ENCODE measurements at regions of chr3 and their contacts with region 1.

Region 1: DNA sequence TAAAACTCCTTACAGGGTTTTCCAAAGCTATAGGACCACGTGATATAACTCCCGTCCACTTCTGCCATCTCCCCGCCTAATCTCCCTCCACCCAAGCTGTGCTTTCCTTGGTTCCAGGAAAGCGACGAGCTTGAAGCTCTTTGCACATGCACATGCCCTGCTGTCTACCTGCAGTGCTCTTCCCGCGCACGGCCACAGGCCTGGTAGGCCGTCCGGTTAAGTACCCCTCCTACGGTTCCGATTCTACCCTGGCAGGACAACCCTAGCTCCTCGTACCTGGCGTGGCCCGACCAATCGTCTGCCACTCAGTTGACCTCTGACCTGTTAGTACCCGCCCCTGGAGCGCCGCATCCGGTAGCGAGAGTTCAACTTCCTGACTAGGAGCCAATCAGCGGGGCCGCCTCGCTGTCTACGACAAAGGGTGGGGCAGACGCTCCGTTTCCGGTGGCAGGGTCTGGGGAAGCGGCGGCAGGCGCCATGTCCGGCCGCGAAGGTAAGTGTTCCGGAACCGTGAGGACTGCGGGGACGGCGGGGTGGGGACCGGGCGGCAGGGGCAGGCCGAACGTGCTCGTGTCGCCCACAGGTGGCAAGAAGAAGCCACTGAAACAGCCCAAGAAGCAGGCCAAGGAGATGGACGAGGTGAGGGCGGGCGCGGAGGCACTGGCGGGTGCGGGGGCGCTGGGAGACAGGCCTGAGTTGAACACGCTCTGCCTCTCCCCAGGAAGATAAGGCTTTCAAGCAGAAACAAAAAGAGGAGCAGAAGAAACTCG is at the starts of genes CCDC51 and TMA7:
- DNase-seq: peak; percentile 99
- ATAC-seq: peak; percentile 95
- H3K4me3 Mint-ChIP-seq: peak within 1 kb of the TSS; percentile 99
- H3K27ac Mint-ChIP-seq: peak within 1 kb of the TSS; percentile 99
- H3K4me1 Mint-ChIP-seq: peaks cover 17% of the 10 kb centered on the region
- H3K27me3 Mint-ChIP-seq: no peaks in the 10 kb centered on the region
- CTCF ChIP-seq: no peak
- total RNA-seq, gene CCDC51: 23.9 to 25.1 TPM (median 24.7 TPM) in 3 replicates
- total RNA-seq, gene TMA7: 281 to 318 TPM (median 285 TPM) in 3 replicates

Region 2: GRCh38 chr3:48232734-48233133 is 207.3 kb before region 1 on chr3:
- CTCF ChIA-PET with region 1: interaction called, 30 read pairs
- POLR2A ChIA-PET with region 1: no interaction called
- DNase-seq: peak; percentile 86
- ATAC-seq: peak; percentile 99
- H3K4me3 Mint-ChIP-seq: no peak overlapping the region
- H3K27ac Mint-ChIP-seq: 0 out of 2 replicates have a peak overlapping the region, but pooled peaks have one; percentile 16
- H3K4me1 Mint-ChIP-seq: peaks cover 15% of the 10 kb centered on the region
- H3K27me3 Mint-ChIP-seq: peaks cover 4% of the 10 kb centered on the region; the same call in 1 of the 2 replicates
- CTCF ChIP-seq: peak; percentile 32; the same call in 1 of the 2 replicates

Region 3: GRCh38 chr3:48301020-48301796 is 138.8 kb before region 1 on chr3:
- CTCF ChIA-PET with region 1: interaction called, 18 read pairs
- POLR2A ChIA-PET with region 1: no interaction called
- DNase-seq: peak; percentile 93
- ATAC-seq: peak; percentile 93
- H3K4me3 Mint-ChIP-seq: peak within 1 kb of the TSS; percentile 85
- H3K27ac Mint-ChIP-seq: peak within 1 kb of the TSS; percentile 84
- H3K4me1 Mint-ChIP-seq: peaks cover 19% of the 10 kb centered on the region
- H3K27me3 Mint-ChIP-seq: peaks cover 20% of the 10 kb centered on the region
- CTCF ChIP-seq: no peak

Region 4: GRCh38 chr3:48400824-48401433 is 39.1 kb before region 1 on chr3:
- CTCF ChIA-PET with region 1: interaction called, 378 read pairs
- POLR2A ChIA-PET with region 1: interaction called, 8 read pairs
- DNase-seq: peak; percentile 50
- ATAC-seq: peak; percentile 63
- H3K4me3 Mint-ChIP-seq: no peak overlapping the region
- H3K27ac Mint-ChIP-seq: peak overlapping the region; percentile 88
- H3K4me1 Mint-ChIP-seq: peaks cover 11% of the 10 kb centered on the region
- H3K27me3 Mint-ChIP-seq: peaks cover 2% of the 10 kb centered on the region
- CTCF ChIP-seq: peak; percentile 68

Region 5: GRCh38 chr3:48492543-48493501 is 52.8 kb after region 1 on chr3:
- CTCF ChIA-PET with region 1: interaction called, 16 read pairs
- POLR2A ChIA-PET with region 1: no interaction called
- DNase-seq: no peak
- ATAC-seq: no peak
- H3K4me3 Mint-ChIP-seq: no peak overlapping the region
- H3K27ac Mint-ChIP-seq: no peak overlapping the region
- H3K4me1 Mint-ChIP-seq: peaks cover 22% of the 10 kb centered on the region
- H3K27me3 Mint-ChIP-seq: no peaks in the 10 kb centered on the region
- CTCF ChIP-seq: no peak

Region 6: DNA sequence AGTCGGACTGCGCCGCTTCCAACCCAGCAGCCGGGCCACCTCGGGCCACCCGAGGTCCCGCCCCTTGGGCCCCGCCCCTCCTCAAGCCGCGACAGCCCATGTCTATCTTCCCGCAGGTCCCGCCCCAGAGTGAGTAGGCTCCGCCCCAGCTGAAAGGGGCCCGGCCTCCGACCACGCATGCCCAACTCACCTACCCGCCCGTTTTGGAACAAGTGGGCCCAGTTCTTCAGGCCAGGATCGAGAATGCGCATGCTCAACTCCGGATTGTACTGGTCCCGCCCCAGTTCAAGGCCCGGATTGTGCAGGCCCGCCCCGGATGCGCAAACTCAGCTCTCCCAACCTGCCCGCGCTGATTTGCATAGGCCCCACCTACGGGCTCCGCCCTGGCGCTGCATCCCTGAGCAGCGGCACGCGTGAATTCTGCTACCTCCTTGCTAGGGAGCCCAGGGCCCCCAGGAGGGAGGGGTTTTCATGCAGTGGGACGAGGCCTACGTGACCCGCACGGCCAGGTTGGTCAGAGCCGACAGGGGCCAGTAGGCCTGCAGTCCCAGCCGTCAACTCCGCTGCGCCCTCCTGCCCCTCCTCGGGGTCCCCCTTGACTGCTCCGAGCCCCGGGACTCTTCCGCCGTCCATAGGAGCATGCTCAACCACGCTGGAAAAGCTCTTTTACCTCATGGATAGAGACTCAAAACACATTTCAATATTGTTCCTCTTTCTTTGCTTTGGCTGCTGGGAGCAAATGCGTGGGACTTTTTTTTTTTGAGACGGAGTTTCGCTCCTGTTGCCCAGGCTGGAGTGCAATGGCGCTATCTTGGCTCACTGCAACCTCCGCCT is 117.0 kb after region 1 on chr3 and contains the start of gene PFKFB4:
- CTCF ChIA-PET with region 1: interaction called, 84 read pairs
- POLR2A ChIA-PET with region 1: no interaction called
- DNase-seq: peak; percentile 99
- ATAC-seq: peak; percentile 82
- H3K4me3 Mint-ChIP-seq: peak within 1 kb of the TSS; percentile 86
- H3K27ac Mint-ChIP-seq: peak within 1 kb of the TSS; percentile 95
- H3K4me1 Mint-ChIP-seq: peaks cover 67% of the 10 kb centered on the region
- H3K27me3 Mint-ChIP-seq: no peaks in the 10 kb centered on the region
- CTCF ChIP-seq: no peak
- total RNA-seq, gene PFKFB4: 18.0 to 26.8 TPM (median 26.7 TPM) in 3 replicates

Region 7: GRCh38 chr3:48708481-48708889 is 268.5 kb after region 1 on chr3:
- CTCF ChIA-PET with region 1: no interaction called
- POLR2A ChIA-PET with region 1: no interaction called
- DNase-seq: no peak
- ATAC-seq: no peak
- H3K4me3 Mint-ChIP-seq: no peak overlapping the region
- H3K27ac Mint-ChIP-seq: peak overlapping the region; percentile 97
- H3K4me1 Mint-ChIP-seq: peaks cover 45% of the 10 kb centered on the region
- H3K27me3 Mint-ChIP-seq: no peaks in the 10 kb centered on the region
- CTCF ChIP-seq: no peak

Measured in WTC11 (cell line).